Dorsolateral prefrontal cortex (tissue), 120 donors: ENCODE measurements at regions of chr3 and their contacts with region 1.

Region 1: GRCh38 chr3:53938645-53939044 is 47.0 kb upstream of the SELENOK start:
- DNase-seq: peak in 4 of 10 donors; percentile 19 to 47 (median 36)
- H3K4me3 ChIP-seq: no peak overlapping the region
- H3K27ac ChIP-seq: no peak overlapping the region
- H3K27me3 ChIP-seq: peaks cover 0 to 4% (median 0%) of the 10 kb centered on the region in 45 donors
- CTCF ChIP-seq: peak; percentile 51 to 94 (median 80)

Region 2: DNA sequence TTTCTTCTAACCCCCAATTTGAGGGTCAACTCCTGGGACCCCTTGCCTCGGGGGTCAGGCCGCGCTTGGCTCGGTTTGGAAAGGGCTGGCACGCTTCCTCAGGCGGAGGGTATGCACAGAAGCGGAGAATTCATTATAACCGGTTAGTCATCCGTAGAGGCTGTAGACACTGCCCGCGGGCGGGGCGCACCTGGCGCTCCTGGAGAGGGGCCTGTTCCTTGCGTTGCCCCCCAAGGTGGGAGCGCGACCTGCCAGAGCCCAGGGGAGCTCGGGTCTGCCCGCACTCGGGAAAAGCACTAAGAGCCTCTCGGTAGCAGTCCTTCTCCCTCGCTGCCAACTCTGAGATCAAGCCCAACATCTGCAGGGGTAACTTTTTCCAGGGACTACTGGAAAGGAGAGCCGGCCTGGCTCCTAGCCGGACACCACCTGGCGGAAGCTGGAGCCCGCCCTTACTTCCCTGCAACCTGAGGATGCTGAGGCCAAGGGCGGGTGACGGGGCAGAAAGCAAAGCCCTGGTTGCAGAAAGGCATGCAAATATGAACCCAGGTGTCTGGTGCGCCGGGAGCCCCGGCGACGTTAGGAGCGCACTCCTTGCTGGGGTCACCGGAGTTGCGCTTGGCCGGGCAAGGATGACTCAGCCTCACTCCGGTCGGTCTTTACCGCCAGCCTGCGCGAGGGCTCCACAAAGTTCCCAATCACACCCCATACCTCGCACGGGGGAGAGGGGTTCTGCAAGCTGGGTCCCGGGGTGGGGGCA is 182.2 kb after region 1 on chr3:
- intact Hi-C with region 1: loop called (anchors 5 to 10 kb)
- DNase-seq: peak in 1 of 10 donors; percentile 15
- H3K4me3 ChIP-seq: peak overlapping the region; percentile 42 to 79 (median 64)
- H3K27ac ChIP-seq: peak overlapping the region in 48 of 59 donors; percentile 11 to 88 (median 70)
- H3K27me3 ChIP-seq: peaks cover 0 to 53% (median 10%) of the 10 kb centered on the region in 45 donors
- CTCF ChIP-seq: no peak